ENCODE measurements at regions of chr17 and their contacts with region 1.

Region 1: DNA sequence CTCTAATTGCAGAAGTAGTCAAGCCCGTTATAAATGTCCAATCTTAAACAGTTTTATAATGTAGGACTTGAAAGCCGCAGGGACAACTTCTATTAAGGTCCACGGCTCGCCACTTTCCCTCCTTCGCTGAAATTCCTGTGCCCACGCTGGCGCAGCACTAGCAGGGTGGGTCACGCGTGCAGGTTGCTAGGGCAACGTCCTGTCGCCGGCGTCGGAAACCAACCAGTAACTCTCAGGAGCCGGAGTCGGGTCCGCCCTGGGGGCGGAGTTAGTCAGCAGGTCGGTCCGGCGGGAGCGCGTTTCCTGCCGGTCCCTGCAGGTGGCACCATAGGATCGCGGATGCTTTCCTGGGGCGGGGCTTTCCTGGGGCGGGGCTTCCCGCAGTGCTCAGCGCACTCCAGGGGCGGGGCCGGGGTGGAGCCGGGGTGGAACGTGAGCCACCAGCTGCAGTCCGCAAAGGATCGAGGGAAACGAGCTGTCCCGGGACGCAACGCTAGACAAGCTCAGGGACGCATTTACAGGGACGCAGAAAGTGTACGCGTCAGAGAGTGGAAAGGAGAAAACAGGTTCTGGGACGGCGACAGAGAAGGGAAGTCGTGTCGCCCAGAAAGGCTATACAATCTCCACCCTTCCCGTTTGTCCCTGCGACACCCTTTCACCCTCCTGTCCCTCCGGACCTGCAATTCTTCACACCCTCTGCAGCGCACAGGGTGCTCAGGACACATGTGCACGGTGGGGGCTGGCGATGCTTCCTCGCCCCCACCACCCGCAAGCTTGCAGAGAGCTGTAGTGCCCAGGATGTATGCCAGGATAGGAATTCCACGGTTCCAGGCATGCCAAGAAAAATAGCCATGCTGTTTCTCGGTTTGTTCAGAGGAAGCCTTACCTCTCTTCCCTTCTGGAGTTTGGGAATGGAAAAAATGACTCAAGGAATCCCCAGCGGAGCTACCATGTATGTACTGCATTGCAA is 12.4 kb downstream of the COPZ2 start:
- DNase-seq: peak; percentile 97 to 99
- ATAC-seq: peak; percentile 86 to 89 (median 87)
- H3K4me3 ChIP-seq: peak overlapping the region; percentile 67
- H3K27ac ChIP-seq: peak overlapping the region; percentile 79
- H3K4me1 ChIP-seq: peaks cover 39% of the 10 kb centered on the region
- H3K27me3 ChIP-seq: peaks cover 0 to 3% (median 0%) of the 10 kb centered on the region in 3 donors
- CTCF ChIP-seq: peak; percentile 67

Region 2: DNA sequence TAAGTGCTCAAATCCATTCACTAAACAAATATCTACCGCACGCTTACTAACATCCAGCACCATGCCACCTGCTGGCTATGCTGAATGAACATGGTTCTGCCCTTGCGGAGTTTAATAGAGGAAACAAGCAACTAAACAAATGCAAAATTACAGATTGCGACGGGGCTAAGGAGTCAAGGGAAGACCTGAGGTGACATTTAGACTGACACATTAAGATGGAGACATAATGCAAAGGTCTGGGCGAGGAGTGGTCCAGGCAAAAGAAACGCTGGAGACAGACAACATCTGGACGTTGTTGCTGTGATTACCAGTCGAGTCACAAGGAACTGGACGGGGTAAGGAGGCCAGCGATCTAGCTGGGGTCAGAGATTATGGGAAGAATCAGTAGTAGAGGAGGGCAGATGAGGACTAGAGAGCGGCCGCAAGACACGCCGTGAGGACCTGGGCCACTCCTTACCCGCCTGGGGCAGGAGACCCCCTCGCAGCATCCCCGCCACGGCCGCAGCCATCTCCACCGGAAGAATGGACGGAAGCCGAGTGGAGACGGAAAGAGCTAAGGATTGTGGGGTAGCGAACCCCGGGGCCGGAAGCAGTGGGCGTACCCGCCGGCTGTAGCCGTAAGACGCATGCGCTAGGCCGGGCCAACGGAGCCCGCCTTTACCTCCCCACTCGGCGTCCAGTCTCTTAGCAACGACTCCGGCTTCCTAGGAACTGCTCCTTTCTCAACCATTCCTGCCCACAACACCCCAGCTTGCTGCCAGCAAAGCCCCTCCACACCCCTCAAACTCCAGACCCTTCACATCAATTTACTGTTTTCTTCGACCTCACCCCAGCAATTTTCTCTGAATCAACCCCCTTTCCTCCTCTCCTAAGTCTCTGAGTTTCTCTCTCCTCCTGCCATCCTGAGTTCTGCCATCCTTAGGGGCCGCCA is 194.0 kb before region 1 on chr17 and contains the starts of genes LRRC46 and MRPL10:
- intact Hi-C with region 1: no loop called
- DNase-seq: peak; percentile 91 to 96
- ATAC-seq: peak; percentile 97 to 99 (median 98)
- H3K4me3 ChIP-seq: peak within 1 kb of the TSS; percentile 93
- H3K27ac ChIP-seq: peak within 1 kb of the TSS; percentile 76
- H3K4me1 ChIP-seq: peaks cover 23% of the 10 kb centered on the region
- H3K27me3 ChIP-seq: no peaks in the 10 kb centered on the region
- CTCF ChIP-seq: no peak
- total RNA-seq, gene LRRC46: 0.15 to 0.54 TPM in 2 of 4 donors, not detected in the others
- total RNA-seq, gene MRPL10: 37.8 to 51.9 (median 46.3) TPM

Region 3: GRCh38 chr17:48074315-48075081 is 49.3 kb after region 1 on chr17:
- intact Hi-C with region 1: loop called (anchors 1 to 2 kb)
- DNase-seq: peak; percentile 58 to 83
- ATAC-seq: peak; percentile 80 to 83 (median 80)
- H3K4me3 ChIP-seq: no peak overlapping the region
- H3K27ac ChIP-seq: peak overlapping the region; percentile 69
- H3K4me1 ChIP-seq: peaks cover 15% of the 10 kb centered on the region
- H3K27me3 ChIP-seq: no peaks in the 10 kb centered on the region
- CTCF ChIP-seq: peak; percentile 87

Region 4: GRCh38 chr17:48593840-48594537 is 568.8 kb after region 1 on chr17:
- intact Hi-C with region 1: loop called in 1 of 2 experiments (anchors 10 kb)
- DNase-seq: peak; percentile 83 to 85
- ATAC-seq: peak; percentile 68 to 76 (median 72)
- H3K4me3 ChIP-seq: peak overlapping the region; percentile 50
- H3K27ac ChIP-seq: no peak overlapping the region
- H3K4me1 ChIP-seq: peaks cover 10% of the 10 kb centered on the region
- H3K27me3 ChIP-seq: peaks cover 0 to 91% (median 41%) of the 10 kb centered on the region in 3 donors
- CTCF ChIP-seq: peak; percentile 90

Measured in psoas muscle (tissue), 8 donors.